Activated T-helper 1 cell treated with anti-CD3 and anti-CD28 coated beads, Interleukin-12 subunit alpha, Interleukin-12 subunit beta, Interleukin-2, Interleukin-4 antibody, amounts not matched to agents 30 ng/mL and 10 ng/mL and 1 ng/mL, durations not matched to agents 14 hours and 24 hours and 36 hours (primary cell): ENCODE measurements at regions of chr14 and their contacts with region 1.

Region 1: DNA sequence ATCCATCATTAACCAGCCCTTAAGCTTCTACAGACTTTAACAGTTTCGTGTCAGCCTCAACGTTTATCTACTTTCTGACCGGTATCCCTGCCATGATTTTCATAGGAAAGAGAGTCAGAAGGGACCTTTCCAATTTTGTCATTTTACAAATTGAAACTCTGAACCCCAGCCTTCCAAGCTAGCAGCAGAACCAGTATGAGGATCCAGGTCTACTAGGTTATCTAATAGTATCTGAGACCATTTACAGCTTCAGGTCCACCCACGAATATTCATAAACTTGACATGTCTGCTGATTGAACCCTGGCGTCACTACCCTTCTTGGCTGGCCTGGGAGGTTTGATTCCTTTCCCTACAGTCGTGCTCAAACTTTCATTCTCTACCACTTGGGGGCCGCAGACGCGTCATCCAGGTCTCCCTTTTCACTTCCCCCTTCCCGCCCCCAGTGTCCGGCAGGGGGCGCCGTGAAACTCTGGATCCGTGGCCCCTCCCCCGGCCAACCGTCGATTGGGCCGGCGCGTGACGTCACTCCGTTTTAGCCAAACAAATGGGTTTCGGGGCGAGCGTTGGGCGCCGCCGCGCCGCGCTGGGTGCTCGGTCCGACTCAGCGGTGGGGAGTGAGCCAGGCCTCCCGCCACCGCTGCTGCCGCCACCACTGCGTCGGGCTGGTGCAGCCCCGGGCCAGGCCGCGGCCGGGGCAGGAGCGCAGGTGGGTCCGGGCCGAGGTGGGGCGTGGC is at the start of gene FBXO34:
- DNase-seq: peak; percentile 99
- H3K4me3 Mint-ChIP-seq: peak within 1 kb of the TSS; percentile 90
- H3K27ac Mint-ChIP-seq: peak within 1 kb of the TSS; percentile 94
- H3K4me1 Mint-ChIP-seq: peaks cover 44% of the 10 kb centered on the region
- H3K27me3 Mint-ChIP-seq: peaks cover 2% of the 10 kb centered on the region
- total RNA-seq, gene FBXO34: 24.7 and 26.6 TPM in 2 replicates

Region 2: GRCh38 chr14:55051426-55052268 is 219.4 kb before region 1 on chr14 and contains the start of gene MAPK1IP1L:
- intact Hi-C with region 1: loop called (anchors 10 kb)
- DNase-seq: peak; percentile 90
- H3K4me3 Mint-ChIP-seq: peak within 1 kb of the TSS; percentile 94
- H3K27ac Mint-ChIP-seq: peak within 1 kb of the TSS; percentile 95
- H3K4me1 Mint-ChIP-seq: peaks cover 37% of the 10 kb centered on the region
- H3K27me3 Mint-ChIP-seq: no peaks in the 10 kb centered on the region
- total RNA-seq, gene MAPK1IP1L: 139 and 141 TPM in 2 replicates

Region 3: GRCh38 chr14:55212634-55213033 is 58.4 kb before region 1 on chr14:
- intact Hi-C with region 1: loop called (anchors 5 kb)
- DNase-seq: no peak
- H3K4me3 Mint-ChIP-seq: no peak overlapping the region
- H3K27ac Mint-ChIP-seq: no peak overlapping the region
- H3K4me1 Mint-ChIP-seq: no peaks in the 10 kb centered on the region
- H3K27me3 Mint-ChIP-seq: peaks cover 9% of the 10 kb centered on the region

Region 4: DNA sequence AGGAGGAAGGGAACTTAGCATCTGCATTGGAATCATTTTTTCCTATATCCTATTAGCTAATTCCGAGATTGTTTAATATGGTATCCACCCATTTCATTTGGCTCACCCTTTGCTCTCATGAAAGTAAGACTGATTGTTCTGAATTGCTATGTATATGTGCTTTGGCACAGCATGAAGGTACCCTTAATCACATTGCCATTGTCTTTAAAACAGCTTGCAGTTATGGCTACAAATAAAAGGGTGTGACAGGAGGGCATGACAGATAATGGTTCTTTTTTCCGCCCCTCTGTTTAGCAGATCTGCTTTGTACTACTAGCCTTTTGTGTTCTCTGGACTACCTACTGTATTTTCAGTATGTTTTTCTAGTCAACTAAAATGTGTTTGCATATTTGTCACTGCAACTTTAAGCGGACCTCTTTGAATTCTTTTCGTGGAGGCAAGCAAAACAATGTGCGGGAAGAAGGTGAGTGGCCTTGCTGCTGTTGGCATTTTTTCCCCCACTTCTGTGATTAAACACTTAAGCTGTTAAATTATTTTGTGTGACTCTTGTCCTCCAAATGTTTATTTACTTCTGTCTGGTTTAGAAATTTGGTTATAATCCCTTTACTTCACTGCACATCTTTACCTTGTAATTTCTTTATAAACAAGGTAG is 36.1 kb after region 1 on chr14:
- intact Hi-C with region 1: loop called (anchors 5 kb)
- DNase-seq: no peak
- H3K4me3 Mint-ChIP-seq: no peak overlapping the region
- H3K27ac Mint-ChIP-seq: no peak overlapping the region
- H3K4me1 Mint-ChIP-seq: peaks cover 30% of the 10 kb centered on the region
- H3K27me3 Mint-ChIP-seq: no peaks in the 10 kb centered on the region

Region 5: DNA sequence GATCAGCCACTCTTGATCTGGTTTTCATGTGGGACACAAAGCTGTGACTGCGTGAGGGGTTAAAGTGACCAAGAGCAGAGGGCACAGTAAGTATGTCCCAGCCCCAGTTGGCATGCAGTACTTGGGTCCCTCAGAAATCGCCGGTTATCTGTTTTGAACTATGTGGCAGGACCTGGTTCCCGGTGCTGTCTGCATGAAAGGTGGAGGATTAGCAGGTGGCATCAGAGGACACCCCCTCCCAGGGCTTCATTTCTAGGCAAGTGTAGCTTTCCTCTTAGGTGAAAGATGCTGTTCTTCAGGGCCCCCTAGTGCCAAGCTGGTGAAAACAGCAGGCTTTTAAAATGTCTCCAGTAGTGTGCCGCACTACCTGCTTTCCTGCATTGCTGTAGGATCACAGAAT is 83.5 kb after region 1 on chr14:
- intact Hi-C with region 1: loop called (anchors 1 kb)
- DNase-seq: peak; percentile 45
- H3K4me3 Mint-ChIP-seq: peak overlapping the region; percentile 71
- H3K27ac Mint-ChIP-seq: peak overlapping the region; percentile 93
- H3K4me1 Mint-ChIP-seq: peaks cover 29% of the 10 kb centered on the region
- H3K27me3 Mint-ChIP-seq: no peaks in the 10 kb centered on the region

Region 6: GRCh38 chr14:55411426-55412389 is 140.7 kb after region 1 on chr14 and contains the start of gene ATG14:
- intact Hi-C with region 1: loop called (anchors 1 kb)
- DNase-seq: peak; percentile 70
- H3K4me3 Mint-ChIP-seq: peak within 1 kb of the TSS; percentile 89
- H3K27ac Mint-ChIP-seq: peak within 1 kb of the TSS; percentile 85
- H3K4me1 Mint-ChIP-seq: peaks cover 29% of the 10 kb centered on the region
- H3K27me3 Mint-ChIP-seq: no peaks in the 10 kb centered on the region
- total RNA-seq, gene ATG14: 4.8 and 6.2 TPM in 2 replicates

Region 7: GRCh38 chr14:56117765-56118610 is 847.0 kb after region 1 on chr14 and contains the start of gene PELI2:
- intact Hi-C with region 1: loop called (anchors 5 kb)
- DNase-seq: peak; percentile 78
- H3K4me3 Mint-ChIP-seq: peak within 1 kb of the TSS; percentile 93
- H3K27ac Mint-ChIP-seq: peak within 1 kb of the TSS; percentile 85
- H3K4me1 Mint-ChIP-seq: peaks cover 41% of the 10 kb centered on the region
- H3K27me3 Mint-ChIP-seq: peaks cover 39% of the 10 kb centered on the region
- total RNA-seq, gene PELI2: 4.4 and 4.5 TPM in 2 replicates